ENCODE measurements at regions of chr7 and their contacts with region 1.

Region 1: DNA sequence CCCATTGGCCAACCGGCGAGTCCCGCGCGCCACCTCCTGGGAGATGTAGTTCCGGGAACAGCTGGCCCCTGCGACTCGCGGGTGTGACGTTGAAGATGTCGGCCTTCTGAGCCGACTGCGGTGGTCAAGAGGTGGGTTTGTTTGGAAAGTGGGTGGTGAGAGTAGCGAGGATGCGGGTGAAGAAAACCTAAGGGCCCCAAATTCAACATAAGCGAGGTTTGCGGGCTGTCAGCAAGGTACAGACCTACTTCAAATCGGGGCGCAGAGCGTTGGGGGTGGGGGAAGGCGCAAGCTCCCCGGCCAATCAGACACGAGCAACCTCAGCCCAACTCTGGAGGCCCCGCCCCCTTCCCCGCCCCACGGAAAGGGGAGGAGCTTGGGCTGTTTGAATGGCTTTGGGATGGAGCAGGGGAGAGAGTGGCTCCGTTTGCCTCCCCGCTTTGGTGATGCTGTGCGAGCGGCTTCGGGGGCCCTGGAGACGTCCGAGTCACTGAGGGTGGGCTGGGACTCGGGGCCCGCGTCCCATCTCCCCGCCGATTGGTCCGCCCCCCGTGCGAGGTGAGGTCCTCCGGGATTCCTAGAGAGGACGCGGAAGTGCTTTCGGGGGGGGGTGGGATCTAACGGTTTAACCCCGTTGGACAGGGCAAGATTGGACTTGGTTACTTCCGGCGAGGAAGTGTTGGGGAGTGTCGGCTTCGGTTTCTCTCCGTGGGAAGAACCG is at the start of gene ZKSCAN5:
- DNase-seq: peak; percentile 99
- ATAC-seq: peak; percentile 96
- total RNA-seq, gene ZKSCAN5: 6.1 TPM

Region 2: DNA sequence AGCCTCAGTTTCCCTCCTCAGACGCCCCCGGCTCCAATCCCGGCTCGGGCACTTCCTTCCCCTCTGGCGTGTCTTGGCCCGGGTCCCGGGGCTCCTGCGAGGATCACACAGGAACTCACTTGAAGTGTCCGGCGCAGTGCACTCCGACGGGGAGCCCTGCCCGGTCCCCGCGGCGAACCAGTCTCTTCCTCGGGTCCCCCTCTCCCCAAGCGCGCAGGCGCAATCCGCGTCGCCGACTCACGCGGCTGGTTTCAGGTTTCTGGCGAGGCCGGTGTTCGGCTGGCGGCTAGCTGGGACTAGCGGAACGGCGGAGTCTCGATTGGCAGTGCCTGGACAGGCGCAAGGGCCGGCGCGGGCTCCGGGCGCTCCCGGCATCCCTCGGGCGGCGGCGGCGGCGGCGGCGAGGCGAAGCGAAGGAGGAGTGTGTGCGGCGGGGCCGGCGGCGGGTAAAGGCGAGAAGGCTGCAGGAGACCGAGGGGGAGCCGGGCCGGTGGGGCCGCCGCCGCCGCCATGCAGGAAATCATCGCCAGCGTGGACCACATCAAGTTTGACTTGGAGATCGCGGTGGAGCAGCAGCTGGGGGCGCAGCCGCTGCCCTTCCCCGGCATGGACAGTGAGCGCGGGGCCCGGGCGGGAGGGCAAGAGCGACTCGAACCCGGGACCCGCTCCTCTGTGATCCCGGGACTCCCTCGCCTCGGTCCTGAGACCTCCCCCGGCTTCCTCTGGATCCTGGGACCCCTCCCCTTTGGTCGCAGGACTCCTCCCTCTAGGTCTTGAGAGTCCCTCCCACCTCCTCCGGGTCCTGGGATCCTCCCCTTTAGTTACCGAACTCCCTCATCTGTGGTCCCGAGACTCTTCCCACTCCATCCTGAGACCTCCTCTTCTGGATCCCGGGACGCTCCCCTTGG is 65.9 kb before region 1 on chr7 and contains the starts of genes CPSF4 and PTCD1:
- intact Hi-C with region 1: no loop called
- DNase-seq: peak; percentile 97
- ATAC-seq: peak; percentile 99
- total RNA-seq, gene CPSF4: 19.9 TPM
- total RNA-seq, gene PTCD1: 3.0 TPM

Region 3: DNA sequence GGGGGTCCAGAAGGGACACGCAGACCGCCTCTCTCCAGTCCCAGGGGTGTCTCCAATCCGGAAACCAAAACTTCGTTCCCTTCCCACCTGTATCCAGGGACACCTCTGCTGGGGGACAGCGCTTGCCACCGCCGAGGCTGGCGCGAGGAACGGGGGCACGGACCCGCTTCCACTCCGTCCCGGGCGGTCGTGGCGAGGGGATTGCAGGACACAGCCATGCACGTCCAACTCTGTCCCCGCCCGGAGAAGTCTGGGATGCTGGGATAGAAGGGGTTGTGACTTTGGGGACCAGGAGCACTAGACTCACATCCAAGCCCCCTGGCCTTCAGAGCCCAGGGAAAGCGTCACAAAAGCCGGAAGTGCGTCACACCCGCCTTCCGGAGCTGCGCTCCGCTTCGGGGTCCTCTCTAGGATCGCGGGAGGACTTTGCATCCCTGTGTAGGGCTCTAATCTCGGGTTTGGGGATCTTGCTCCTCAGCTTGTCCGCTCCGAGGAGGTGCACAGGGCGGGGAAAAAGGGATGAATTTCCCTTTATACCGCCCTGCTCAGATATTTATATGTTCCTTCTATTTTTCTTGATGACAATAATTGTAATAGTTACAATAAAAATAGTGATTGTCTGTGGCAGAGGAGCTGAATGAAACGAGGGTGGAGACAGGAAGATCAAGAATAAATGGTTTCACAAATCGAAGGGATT is 47.2 kb after region 1 on chr7 and contains the start of gene FAM200A:
- intact Hi-C with region 1: loop called (anchors 10 kb)
- DNase-seq: peak; percentile 92
- ATAC-seq: peak; percentile 99
- total RNA-seq, gene FAM200A: 6.5 TPM

Measured in Right ventricle myocardium superior (tissue), 1 donor.